ENCODE measurements at regions of chr6 and their contacts with region 1.

Region 1: GRCh38 chr6:32177788-32178546 is at the start of gene RNF5:
- DNase-seq: peak; percentile 92
- H3K4me3 ChIP-seq: peak within 1 kb of the TSS; percentile 84 to 99
- H3K27ac ChIP-seq: peak within 1 kb of the TSS; percentile 98 to 99
- H3K4me1 ChIP-seq: peaks cover 12 to 37% of the 10 kb centered on the region in 2 experiments; a peak in 3 of 4 replicates
- H3K27me3 ChIP-seq: no peaks in the 10 kb centered on the region
- CTCF ChIP-seq: no peak
- EP300 ChIP-seq: peak in 1 of 2 experiments; percentile 27; a peak in 1 of 4 replicates
- RAD21 ChIP-seq: no peak
- polyA plus RNA-seq, gene RNF5: 74.8 and 110 TPM in 2 replicates

Region 2: GRCh38 chr6:31752739-31753319 is 425.1 kb before region 1 on chr6:
- CTCF ChIA-PET with region 1: no interaction called
- POLR2A ChIA-PET with region 1: no interaction called
- DNase-seq: no peak
- H3K4me3 ChIP-seq: no peak overlapping the region
- H3K27ac ChIP-seq: peak overlapping the region in 1 of 2 experiments; percentile 84; a peak in 2 of 4 replicates
- H3K4me1 ChIP-seq: 0 out of 4 replicates have a peak, but pooled peaks cover 0 to 3% of the 10 kb centered on the region in 2 experiments
- H3K27me3 ChIP-seq: no peaks in the 10 kb centered on the region
- CTCF ChIP-seq: no peak
- EP300 ChIP-seq: no peak
- RAD21 ChIP-seq: no peak

Region 3: DNA sequence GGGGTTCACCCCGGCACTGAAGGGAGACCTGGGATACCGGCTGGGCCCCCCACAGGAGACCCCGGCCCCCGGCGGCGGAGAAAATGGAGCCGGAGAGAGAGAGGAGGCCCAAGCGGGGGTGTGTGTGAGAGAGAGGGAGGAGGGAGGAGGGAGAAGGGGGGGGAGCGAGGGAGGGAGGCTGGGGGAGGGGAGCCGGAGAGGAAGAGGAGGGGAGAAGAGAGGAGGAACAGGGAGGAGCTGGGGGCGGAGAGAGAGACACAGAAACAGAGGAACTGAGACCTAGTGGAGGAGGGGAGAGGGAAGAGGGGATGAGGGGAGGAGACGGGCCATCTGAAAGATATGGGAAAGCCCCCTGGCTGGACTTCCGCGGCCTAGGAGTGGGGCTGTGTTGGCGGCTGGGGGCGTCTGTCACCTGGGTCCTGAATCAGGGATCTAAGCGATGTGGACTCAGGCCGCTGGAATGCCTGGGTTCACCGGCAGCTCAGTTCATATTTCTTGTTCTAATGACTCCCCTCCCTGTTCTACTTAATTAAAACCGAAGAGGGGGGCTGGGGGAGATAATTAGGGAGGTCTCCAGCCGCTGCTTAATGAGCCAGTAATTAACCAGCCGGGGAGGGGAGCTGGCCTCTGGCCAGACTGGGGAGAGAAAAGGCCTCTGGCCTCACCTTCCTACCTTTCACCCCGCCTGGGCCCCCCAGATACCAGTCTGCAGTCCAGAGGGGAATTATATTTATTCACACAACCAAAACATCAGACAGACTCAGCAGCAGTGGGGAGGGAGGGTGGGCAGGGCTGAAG is 12.3 kb after region 1 on chr6 and contains the start of gene PBX2:
- CTCF ChIA-PET with region 1: interaction called, 4 read pairs
- POLR2A ChIA-PET with region 1: interaction called, 22 read pairs
- DNase-seq: peak; percentile 85
- H3K4me3 ChIP-seq: peak within 1 kb of the TSS; percentile 60 to 81
- H3K27ac ChIP-seq: peak within 1 kb of the TSS; percentile 81 to 87
- H3K4me1 ChIP-seq: peaks cover 0 to 25% of the 10 kb centered on the region in 2 experiments; a peak in 1 of 4 replicates
- H3K27me3 ChIP-seq: no peaks in the 10 kb centered on the region
- CTCF ChIP-seq: no peak
- EP300 ChIP-seq: peak in 1 of 2 experiments; percentile 21; a peak in 1 of 4 replicates
- RAD21 ChIP-seq: no peak
- polyA plus RNA-seq, gene PBX2: 74.5 and 83.1 TPM in 2 replicates

Region 4: GRCh38 chr6:32195652-32195901 is 17.6 kb after region 1 on chr6:
- CTCF ChIA-PET with region 1: interaction called, 4 read pairs
- POLR2A ChIA-PET with region 1: interaction called, 22 read pairs
- DNase-seq: peak; percentile 94
- H3K4me3 ChIP-seq: peak overlapping the region; percentile 83 to 95
- H3K27ac ChIP-seq: peak overlapping the region in 1 of 2 experiments; percentile 100; a peak in 3 of 4 replicates
- H3K4me1 ChIP-seq: peaks cover 6 to 23% of the 10 kb centered on the region in 2 experiments; a peak in 1 of 4 replicates
- H3K27me3 ChIP-seq: no peaks in the 10 kb centered on the region
- CTCF ChIP-seq: no peak; the same call in 1 of the 2 replicates
- EP300 ChIP-seq: no peak
- RAD21 ChIP-seq: no peak

Region 5: GRCh38 chr6:32210191-32210601 is 32.2 kb after region 1 on chr6:
- CTCF ChIA-PET with region 1: no interaction called
- POLR2A ChIA-PET with region 1: no interaction called
- DNase-seq: no peak
- H3K4me3 ChIP-seq: no peak overlapping the region
- H3K27ac ChIP-seq: no peak overlapping the region
- H3K4me1 ChIP-seq: no peaks in the 10 kb centered on the region
- H3K27me3 ChIP-seq: peaks cover 53% of the 10 kb centered on the region
- CTCF ChIP-seq: no peak
- EP300 ChIP-seq: no peak
- RAD21 ChIP-seq: no peak

Measured in SK-N-SH (cell line).